Common myeloid progenitor, CD34-positive (primary cell): ENCODE measurements at regions of chr5 and their contacts with region 1.

Region 1: GRCh38 chr5:37005946-37006540 is 129.5 kb downstream of the NIPBL start:
- DNase-seq: peak; percentile 22 to 59 (median 50)
- H3K4me3 ChIP-seq: no peak overlapping the region
- H3K27ac ChIP-seq: no peak overlapping the region
- H3K4me1 ChIP-seq: no peaks in the 10 kb centered on the region
- H3K27me3 ChIP-seq: no peaks in the 10 kb centered on the region

Region 2: GRCh38 chr5:36728697-36729543 is 277.1 kb before region 1 on chr5:
- CTCF ChIA-PET with region 1: interaction called, 44 read pairs
- POLR2A ChIA-PET with region 1: no interaction called
- DNase-seq: peak; percentile 71 to 88 (median 83)
- H3K4me3 ChIP-seq: peak overlapping the region in 1 of 7 experiments; percentile 10
- H3K27ac ChIP-seq: no peak overlapping the region
- H3K4me1 ChIP-seq: peaks cover 5 to 20% (median 11%) of the 10 kb centered on the region in 4 experiments
- H3K27me3 ChIP-seq: no peaks in the 10 kb centered on the region

Region 3: GRCh38 chr5:36734422-36734821 is 271.6 kb before region 1 on chr5:
- CTCF ChIA-PET with region 1: interaction called, 44 read pairs
- POLR2A ChIA-PET with region 1: interaction called, 4 read pairs
- DNase-seq: peak; percentile 44 to 62 (median 61)
- H3K4me3 ChIP-seq: no peak overlapping the region
- H3K27ac ChIP-seq: no peak overlapping the region
- H3K4me1 ChIP-seq: peaks cover 0 to 5% (median under 1%) of the 10 kb centered on the region in 4 experiments
- H3K27me3 ChIP-seq: no peaks in the 10 kb centered on the region

Region 4: DNA sequence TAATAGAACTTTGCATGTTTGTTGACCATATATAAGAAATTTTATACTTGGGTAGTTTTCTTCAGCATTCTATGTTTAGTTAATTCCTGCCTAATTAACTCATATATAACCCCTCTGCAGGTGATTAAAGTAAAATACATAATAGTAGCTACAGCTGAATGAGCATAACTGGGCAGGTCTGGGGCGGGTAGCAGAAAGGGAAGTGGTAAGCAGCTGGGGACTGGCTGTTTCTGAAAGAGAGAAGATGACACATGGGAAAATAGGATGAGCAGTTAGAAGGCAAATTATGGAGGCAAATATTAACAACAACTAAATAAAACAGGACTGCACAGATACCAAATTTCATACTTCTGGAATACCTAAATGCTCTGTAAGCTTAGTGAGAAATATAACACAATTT is 115.0 kb after region 1 on chr5:
- CTCF ChIA-PET with region 1: no interaction called
- POLR2A ChIA-PET with region 1: no interaction called
- DNase-seq: peak in 2 of 3 donors; percentile 44 to 55
- H3K4me3 ChIP-seq: no peak overlapping the region
- H3K27ac ChIP-seq: peak overlapping the region in 1 of 2 experiments; percentile 16
- H3K4me1 ChIP-seq: peaks cover 0 to 7% (median 4%) of the 10 kb centered on the region in 4 experiments
- H3K27me3 ChIP-seq: no peaks in the 10 kb centered on the region